ENCODE measurements at regions of chr19 and their contacts with region 1.

Region 1: GRCh38 chr19:7748770-7749209 is 1.5 kb upstream of the CD209 start:
- H3K4me3 Mint-ChIP-seq: no peak overlapping the region
- H3K27ac Mint-ChIP-seq: peak overlapping the region; percentile 25
- H3K4me1 Mint-ChIP-seq: peaks cover 66% of the 10 kb centered on the region
- H3K27me3 Mint-ChIP-seq: peaks cover 5% of the 10 kb centered on the region

Region 2: DNA sequence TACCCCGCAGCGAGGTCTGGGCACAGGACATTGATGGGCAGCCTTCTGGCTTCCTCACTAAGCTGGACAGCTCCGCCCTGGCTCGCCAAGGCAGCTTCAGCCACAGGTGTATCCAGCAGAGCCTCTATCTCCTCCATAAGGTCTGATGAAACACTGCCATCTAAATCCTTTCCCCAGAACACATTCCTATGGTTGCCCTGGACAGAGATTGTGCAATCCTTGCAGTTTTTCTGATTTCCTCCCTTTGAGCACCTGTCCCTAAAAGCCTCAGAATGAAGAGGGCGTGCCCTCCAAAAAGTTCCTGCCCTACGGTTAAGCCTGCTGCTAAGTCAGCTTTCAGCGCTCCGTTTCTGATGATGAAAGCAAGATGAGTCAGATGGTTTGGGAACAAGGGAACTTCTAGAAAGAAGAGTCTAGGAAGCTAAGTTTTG is 35.2 kb after region 1 on chr19:
- intact Hi-C with region 1: loop called (anchors 5 kb)
- H3K4me3 Mint-ChIP-seq: no peak overlapping the region
- H3K27ac Mint-ChIP-seq: peak overlapping the region; percentile 80
- H3K4me1 Mint-ChIP-seq: peaks cover 76% of the 10 kb centered on the region
- H3K27me3 Mint-ChIP-seq: peaks cover 24% of the 10 kb centered on the region

Region 3: DNA sequence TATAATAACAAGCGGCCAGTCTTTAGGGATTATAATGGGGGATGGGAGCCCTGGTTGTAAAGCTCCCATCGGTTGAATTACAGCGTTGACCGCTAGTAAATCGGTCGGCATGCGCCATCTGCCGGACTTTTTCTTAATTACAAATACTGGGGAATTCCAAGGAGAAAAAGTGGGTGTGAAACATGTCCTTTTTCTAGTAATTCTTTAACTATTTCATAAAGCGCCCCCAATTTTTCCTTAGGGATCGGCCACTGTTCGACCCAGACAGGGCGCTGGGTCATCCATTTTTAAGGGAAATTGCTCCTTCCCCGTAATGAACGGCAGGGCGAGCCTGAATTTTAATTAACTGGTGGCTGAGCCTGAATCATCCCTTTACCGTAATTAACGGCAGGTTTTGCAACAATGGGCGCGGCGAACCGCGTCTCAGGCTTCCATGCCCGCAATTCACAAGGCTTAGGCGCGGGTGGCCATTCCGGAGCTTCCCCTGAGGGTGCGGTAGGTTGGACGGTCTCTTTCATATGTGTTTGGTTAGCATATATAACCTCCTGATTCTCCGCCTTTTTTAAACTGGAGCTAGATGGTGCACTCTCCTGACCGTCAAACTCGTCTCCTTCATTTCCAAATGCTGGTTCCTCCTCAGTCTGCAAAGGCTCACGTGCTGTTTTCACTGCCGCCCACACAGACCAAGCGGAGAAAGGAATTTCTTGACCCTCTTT is 51.0 kb after region 1 on chr19:
- intact Hi-C with region 1: loop called (anchors 2 kb)
- H3K4me3 Mint-ChIP-seq: peak overlapping the region; percentile 67
- H3K27ac Mint-ChIP-seq: peak overlapping the region; percentile 78
- H3K4me1 Mint-ChIP-seq: peaks cover 12% of the 10 kb centered on the region
- H3K27me3 Mint-ChIP-seq: peaks cover 3% of the 10 kb centered on the region